ENCODE measurements at regions of chr14 and their contacts with region 1.

Region 1: DNA sequence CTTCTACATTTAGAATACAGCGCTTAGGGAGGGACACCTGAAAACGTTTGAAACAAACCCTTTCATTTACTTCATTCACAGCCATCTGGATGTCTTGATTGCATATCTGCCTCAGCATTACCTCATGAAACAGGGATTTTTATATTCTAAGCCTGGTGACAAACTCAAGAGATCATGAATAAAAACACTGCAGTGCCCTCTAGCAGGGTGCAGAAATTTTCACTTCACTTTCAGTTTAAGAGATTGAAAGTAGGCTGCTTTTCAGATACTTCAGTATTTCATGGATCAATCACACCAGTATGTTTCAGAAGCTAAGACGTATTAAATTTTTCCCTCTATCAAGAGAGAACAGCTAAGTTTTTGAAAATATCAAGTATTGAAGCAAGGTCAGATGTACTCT is 467.8 kb downstream of the MDGA2 start:
- DNase-seq: no peak
- H3K4me3 ChIP-seq: no peak overlapping the region
- H3K4me3 Mint-ChIP-seq: no peak overlapping the region
- H3K27ac Mint-ChIP-seq: no peak overlapping the region
- H3K4me1 ChIP-seq: no peaks in the 10 kb centered on the region
- H3K4me1 Mint-ChIP-seq: no peaks in the 10 kb centered on the region
- H3K27me3 ChIP-seq: no peaks in the 10 kb centered on the region
- H3K27me3 Mint-ChIP-seq: no peaks in the 10 kb centered on the region
- CTCF ChIP-seq: no peak

Region 2: GRCh38 chr14:47057364-47057763 is 150.3 kb before region 1 on chr14:
- CTCF ChIA-PET with region 1: no interaction called
- POLR2A ChIA-PET with region 1: no interaction called
- intact Hi-C with region 1: loop called (anchors 10 kb)
- DNase-seq: no peak
- H3K4me3 ChIP-seq: no peak overlapping the region
- H3K4me3 Mint-ChIP-seq: no peak overlapping the region
- H3K27ac Mint-ChIP-seq: no peak overlapping the region
- H3K4me1 ChIP-seq: no peaks in the 10 kb centered on the region
- H3K4me1 Mint-ChIP-seq: peaks cover 7% of the 10 kb centered on the region
- H3K27me3 ChIP-seq: no peaks in the 10 kb centered on the region
- H3K27me3 Mint-ChIP-seq: peaks cover 2% of the 10 kb centered on the region
- CTCF ChIP-seq: no peak

Region 3: DNA sequence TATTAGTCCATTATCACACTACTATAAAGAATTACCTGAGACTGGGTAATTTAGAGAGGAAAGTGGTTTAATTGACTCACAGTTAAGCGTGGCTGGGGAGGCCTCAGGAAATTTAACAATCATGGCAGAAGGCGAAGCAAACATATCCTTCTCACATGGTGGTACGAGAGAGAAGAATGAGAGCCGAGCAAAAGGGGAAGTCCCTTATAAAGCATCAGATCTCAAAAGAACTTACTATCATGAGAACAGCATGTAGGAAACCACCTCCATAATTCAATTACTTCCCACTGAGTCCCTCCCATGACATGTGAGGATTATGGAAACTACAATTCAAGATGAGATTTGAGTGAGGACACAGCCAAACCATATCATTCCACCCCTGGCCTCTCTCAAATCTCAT is 45.2 kb after region 1 on chr14:
- CTCF ChIA-PET with region 1: no interaction called
- POLR2A ChIA-PET with region 1: no interaction called
- intact Hi-C with region 1: no loop called
- DNase-seq: no peak
- H3K4me3 ChIP-seq: no peak overlapping the region
- H3K4me3 Mint-ChIP-seq: no peak overlapping the region
- H3K27ac Mint-ChIP-seq: no peak overlapping the region
- H3K4me1 ChIP-seq: no peaks in the 10 kb centered on the region
- H3K4me1 Mint-ChIP-seq: no peaks in the 10 kb centered on the region
- H3K27me3 ChIP-seq: no peaks in the 10 kb centered on the region
- H3K27me3 Mint-ChIP-seq: peaks cover 2% of the 10 kb centered on the region
- CTCF ChIP-seq: no peak

Measured in Caco-2 (cell line).